ENCODE measurements at regions of chrX and their contacts with region 1.

Region 1: GRCh38 chrX:129462707-129463106 is 60.6 kb downstream of the SMARCA1 start:
- DNase-seq: no peak
- H3K4me3 ChIP-seq: no peak overlapping the region
- H3K27ac ChIP-seq: no peak overlapping the region
- H3K4me1 ChIP-seq: no peaks in the 10 kb centered on the region
- H3K27me3 ChIP-seq: no peaks in the 10 kb centered on the region
- CTCF ChIP-seq: no peak
- POLR2A ChIP-seq: no peak

Region 2: GRCh38 chrX:129318375-129318774 is 144.3 kb before region 1 on chrX:
- CTCF ChIA-PET with region 1: interaction called, 3 read pairs
- POLR2A ChIA-PET with region 1: no interaction called
- dilution Hi-C with region 1: no loop called
- intact Hi-C with region 1: loop called (anchors 1 kb)
- DNase-seq: peak; percentile 6
- H3K4me3 ChIP-seq: no peak overlapping the region
- H3K27ac ChIP-seq: no peak overlapping the region
- H3K4me1 ChIP-seq: no peaks in the 10 kb centered on the region
- H3K27me3 ChIP-seq: no peaks in the 10 kb centered on the region
- CTCF ChIP-seq: no peak
- POLR2A ChIP-seq: no peak

Measured in endothelial cell of umbilical vein (primary cell).